PC-3 (cell line): ENCODE measurements at regions of chr1 and their contacts with region 1.

Region 1: GRCh38 chr1:23559136-23559984 is at the start of gene ID3:
- DNase-seq: peak; percentile 96
- ATAC-seq: peak; percentile 53
- H3K4me3 ChIP-seq: peak within 1 kb of the TSS; percentile 82
- H3K27ac ChIP-seq: peak within 1 kb of the TSS; percentile 33
- H3K4me1 ChIP-seq: peaks cover 63% of the 10 kb centered on the region
- H3K27me3 ChIP-seq: no peaks in the 10 kb centered on the region
- CTCF ChIP-seq: no peak
- total RNA-seq, gene ID3: 77.7 and 92.5 TPM in 2 replicates

Region 2: GRCh38 chr1:23484253-23485001 is 74.9 kb before region 1 on chr1:
- CTCF ChIA-PET with region 1: interaction called, 10 read pairs
- POLR2A ChIA-PET with region 1: no interaction called
- intact Hi-C with region 1: no loop called
- DNase-seq: peak; percentile 82
- ATAC-seq: peak; percentile 91
- H3K4me3 ChIP-seq: peak overlapping the region; percentile 76
- H3K27ac ChIP-seq: no peak overlapping the region
- H3K4me1 ChIP-seq: peaks cover 12% of the 10 kb centered on the region
- H3K27me3 ChIP-seq: no peaks in the 10 kb centered on the region
- CTCF ChIP-seq: no peak

Region 3: GRCh38 chr1:23577056-23578004 is 18.0 kb after region 1 on chr1:
- CTCF ChIA-PET with region 1: interaction called, 13 read pairs
- POLR2A ChIA-PET with region 1: interaction called, 10 read pairs
- intact Hi-C with region 1: no loop called
- DNase-seq: peak; percentile 65
- ATAC-seq: peak; percentile 83
- H3K4me3 ChIP-seq: peak overlapping the region; percentile 7; the same call in 1 of the 2 replicates
- H3K27ac ChIP-seq: peak overlapping the region; percentile 77
- H3K4me1 ChIP-seq: peaks cover 23% of the 10 kb centered on the region
- H3K27me3 ChIP-seq: no peaks in the 10 kb centered on the region
- CTCF ChIP-seq: no peak

Region 4: GRCh38 chr1:23591460-23592208 is 32.3 kb after region 1 on chr1:
- CTCF ChIA-PET with region 1: no interaction called
- POLR2A ChIA-PET with region 1: no interaction called
- intact Hi-C with region 1: loop called (anchors 5 kb)
- DNase-seq: no peak
- ATAC-seq: no peak
- H3K4me3 ChIP-seq: no peak overlapping the region
- H3K27ac ChIP-seq: no peak overlapping the region
- H3K4me1 ChIP-seq: peaks cover 18% of the 10 kb centered on the region
- H3K27me3 ChIP-seq: no peaks in the 10 kb centered on the region
- CTCF ChIP-seq: no peak

Region 5: GRCh38 chr1:23664837-23665795 is 105.8 kb after region 1 on chr1:
- CTCF ChIA-PET with region 1: no interaction called
- POLR2A ChIA-PET with region 1: no interaction called
- intact Hi-C with region 1: no loop called
- DNase-seq: peak; percentile 24
- ATAC-seq: no peak
- H3K4me3 ChIP-seq: no peak overlapping the region
- H3K27ac ChIP-seq: no peak overlapping the region
- H3K4me1 ChIP-seq: no peaks in the 10 kb centered on the region
- H3K27me3 ChIP-seq: peaks cover 2% of the 10 kb centered on the region; the same call in 1 of the 2 replicates
- CTCF ChIP-seq: peak; percentile 50; the same call in 1 of the 2 replicates